Activated B cell treated with CpG ODN at 0.5 μM for 24 hours (primary cell): ENCODE measurements at regions of chr1 and their contacts with region 1.

Region 1: GRCh38 chr1:235075188-235075926 is 53.3 kb downstream of the TOMM20 start:
- DNase-seq: peak; percentile 54
- ATAC-seq: peak; percentile 76
- H3K4me3 Mint-ChIP-seq: peak overlapping the region; percentile 75
- H3K27ac Mint-ChIP-seq: peak overlapping the region; percentile 95
- H3K4me1 Mint-ChIP-seq: peaks cover 37% of the 10 kb centered on the region
- H3K27me3 Mint-ChIP-seq: no peaks in the 10 kb centered on the region
- CTCF ChIP-seq: no peak

Region 2: DNA sequence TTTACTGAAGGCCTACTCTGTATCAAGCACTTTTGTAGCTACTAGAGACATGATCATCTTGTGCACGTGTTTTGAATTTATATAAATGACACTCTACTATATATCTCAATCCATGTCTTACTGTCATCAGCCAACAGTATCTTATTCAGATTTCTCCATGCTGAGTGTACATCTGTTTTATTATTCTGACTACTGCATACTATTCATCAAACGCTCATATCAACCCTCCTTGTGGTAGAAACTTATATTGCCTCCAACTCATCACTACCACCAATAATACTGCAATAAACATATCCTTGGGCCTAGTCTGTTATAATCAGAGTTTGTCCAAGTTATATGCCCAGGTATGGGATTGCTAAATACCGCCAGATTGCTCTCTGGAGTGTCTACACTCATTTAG is 383.8 kb before region 1 on chr1:
- CTCF ChIA-PET with region 1: no interaction called
- POLR2A ChIA-PET with region 1: no interaction called
- intact Hi-C with region 1: loop called (anchors 5 kb)
- DNase-seq: no peak
- ATAC-seq: no peak
- H3K4me3 Mint-ChIP-seq: no peak overlapping the region
- H3K27ac Mint-ChIP-seq: no peak overlapping the region
- H3K4me1 Mint-ChIP-seq: peaks cover 8% of the 10 kb centered on the region
- H3K27me3 Mint-ChIP-seq: no peaks in the 10 kb centered on the region
- CTCF ChIP-seq: no peak

Region 3: DNA sequence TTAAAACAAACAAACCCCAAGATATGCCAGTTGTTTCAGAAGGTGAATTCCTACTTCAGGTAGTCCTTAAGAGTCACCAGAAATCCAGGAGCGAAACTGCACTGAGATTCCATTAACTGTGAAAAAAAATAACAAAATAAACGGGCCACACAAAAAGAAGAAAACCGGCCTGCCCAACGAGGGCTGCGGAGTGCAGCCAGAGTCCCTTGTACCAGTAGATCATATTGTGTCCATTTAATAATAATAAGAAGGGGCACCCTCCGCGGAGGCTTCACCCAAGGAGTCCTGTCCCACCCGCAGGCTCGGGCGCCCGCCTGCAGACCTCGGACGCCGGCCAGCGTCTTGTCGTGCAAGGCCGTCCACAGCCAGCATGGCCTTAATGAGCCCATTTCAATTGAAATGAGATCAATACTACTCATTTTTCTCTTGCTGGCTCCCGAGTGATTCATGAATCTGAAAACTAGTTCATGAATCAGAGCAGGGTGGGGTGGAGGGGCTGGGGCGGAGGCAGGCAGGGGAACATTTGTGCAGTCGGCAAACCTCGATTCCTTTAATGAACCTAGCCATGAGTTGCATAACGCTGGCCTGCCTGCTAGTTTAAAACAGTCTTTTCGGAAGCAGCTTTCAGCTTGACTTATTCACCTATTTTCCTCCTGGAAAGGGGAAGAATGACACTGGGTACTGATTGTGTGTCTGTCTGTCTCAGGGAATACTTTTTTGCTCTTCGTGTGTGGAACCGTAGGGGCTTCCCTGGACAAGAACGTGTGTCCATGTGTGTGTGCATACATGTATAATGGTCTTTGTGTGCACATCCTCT is 352.2 kb before region 1 on chr1:
- CTCF ChIA-PET with region 1: no interaction called
- POLR2A ChIA-PET with region 1: interaction called, 10 read pairs
- intact Hi-C with region 1: no loop called
- DNase-seq: no peak
- ATAC-seq: peak; percentile 41
- H3K4me3 Mint-ChIP-seq: peak overlapping the region; percentile 67
- H3K27ac Mint-ChIP-seq: peak overlapping the region; percentile 71
- H3K4me1 Mint-ChIP-seq: peaks cover 46% of the 10 kb centered on the region
- H3K27me3 Mint-ChIP-seq: no peaks in the 10 kb centered on the region
- CTCF ChIP-seq: no peak

Region 4: DNA sequence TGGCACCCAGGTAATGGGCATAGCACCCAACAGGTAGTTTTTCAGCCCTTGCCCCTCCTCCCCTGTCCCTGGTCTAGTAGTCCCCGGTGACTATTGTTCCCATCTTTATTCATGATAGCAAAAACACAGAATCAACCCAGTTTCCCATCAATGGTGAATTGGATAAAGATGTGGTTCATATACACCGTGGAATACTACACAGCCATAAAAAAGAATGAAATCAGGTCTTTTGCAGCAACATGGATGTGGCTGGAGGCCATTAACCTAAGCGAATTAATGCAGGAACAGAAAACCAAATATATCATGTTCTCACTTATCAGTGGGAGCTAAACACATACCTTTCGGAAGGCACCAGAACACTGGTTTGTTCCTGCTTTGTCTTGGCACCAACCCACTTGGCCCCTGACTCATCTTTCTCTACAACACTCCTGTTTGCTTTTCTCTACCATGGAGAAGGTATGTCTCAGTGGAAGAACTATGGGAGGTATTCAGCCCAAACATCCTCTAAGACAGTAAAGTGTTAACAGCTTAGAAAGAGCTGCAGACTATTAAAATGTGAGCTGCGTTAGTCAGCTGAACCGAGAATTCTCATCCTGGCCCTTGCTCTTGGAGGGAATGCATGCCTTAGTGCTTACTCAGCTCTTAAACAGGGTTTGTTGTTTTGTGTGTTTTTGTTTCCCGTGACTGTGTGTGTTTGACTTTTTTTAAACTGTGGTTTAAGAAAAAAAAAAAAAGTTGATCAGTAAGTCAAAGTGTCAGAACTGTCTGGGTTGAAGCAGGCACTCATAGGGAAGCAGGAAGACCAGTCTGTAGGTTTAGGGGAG is 149.7 kb before region 1 on chr1:
- CTCF ChIA-PET with region 1: no interaction called
- POLR2A ChIA-PET with region 1: interaction called, 4 read pairs
- intact Hi-C with region 1: loop called (anchors 2 kb)
- DNase-seq: no peak
- ATAC-seq: no peak
- H3K4me3 Mint-ChIP-seq: peak overlapping the region; percentile 78
- H3K27ac Mint-ChIP-seq: peak overlapping the region; percentile 78
- H3K4me1 Mint-ChIP-seq: peaks cover 30% of the 10 kb centered on the region
- H3K27me3 Mint-ChIP-seq: no peaks in the 10 kb centered on the region
- CTCF ChIP-seq: no peak

Region 5: GRCh38 chr1:235018161-235018560 is 57.2 kb before region 1 on chr1:
- CTCF ChIA-PET with region 1: no interaction called
- POLR2A ChIA-PET with region 1: interaction called, 22 read pairs
- intact Hi-C with region 1: no loop called
- DNase-seq: no peak
- ATAC-seq: no peak
- H3K4me3 Mint-ChIP-seq: no peak overlapping the region
- H3K27ac Mint-ChIP-seq: peak overlapping the region; percentile 68
- H3K4me1 Mint-ChIP-seq: peaks cover 72% of the 10 kb centered on the region
- H3K27me3 Mint-ChIP-seq: no peaks in the 10 kb centered on the region
- CTCF ChIP-seq: no peak

Region 6: DNA sequence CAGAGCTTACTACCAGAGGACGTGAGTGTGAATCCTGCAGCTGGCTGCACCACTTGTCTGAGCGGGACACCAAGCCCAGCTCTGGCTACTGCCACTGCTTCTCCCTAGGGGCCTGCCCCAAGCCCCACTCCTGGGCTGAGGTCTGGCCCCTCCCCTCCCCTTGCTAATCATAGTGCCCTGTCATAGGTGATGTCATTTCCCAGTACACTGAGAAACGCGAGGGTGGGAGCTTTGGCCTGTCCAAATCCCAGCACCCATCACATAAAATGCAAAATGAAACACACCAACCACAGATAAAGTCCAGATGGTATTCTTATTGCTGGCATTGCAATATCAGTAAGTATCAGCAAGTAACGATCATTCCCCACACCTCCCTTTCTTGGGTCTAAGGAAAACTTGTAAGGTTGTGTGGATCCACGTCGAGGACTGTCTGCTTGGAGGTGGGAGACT is 24.4 kb before region 1 on chr1:
- CTCF ChIA-PET with region 1: interaction called, 5 read pairs
- POLR2A ChIA-PET with region 1: interaction called, 36 read pairs
- intact Hi-C with region 1: loop called (anchors 1 kb)
- DNase-seq: peak; percentile 30
- ATAC-seq: peak; percentile 51
- H3K4me3 Mint-ChIP-seq: peak overlapping the region; percentile 24
- H3K27ac Mint-ChIP-seq: peak overlapping the region; percentile 60
- H3K4me1 Mint-ChIP-seq: peaks cover 50% of the 10 kb centered on the region
- H3K27me3 Mint-ChIP-seq: no peaks in the 10 kb centered on the region
- CTCF ChIP-seq: no peak